PC-3 (cell line): ENCODE measurements at regions of chr9 and their contacts with region 1.

Region 1: GRCh38 chr9:14322211-14323082 is 8.5 kb upstream of the NFIB start:
- DNase-seq: peak; percentile 90
- ATAC-seq: peak; percentile 69
- H3K4me3 ChIP-seq: peak overlapping the region; percentile 86
- H3K27ac ChIP-seq: peak overlapping the region; percentile 84
- H3K4me1 ChIP-seq: peaks cover 58% of the 10 kb centered on the region
- H3K27me3 ChIP-seq: no peaks in the 10 kb centered on the region
- CTCF ChIP-seq: no peak

Region 2: GRCh38 chr9:13351778-13352386 is 970.6 kb before region 1 on chr9:
- CTCF ChIA-PET with region 1: interaction called, 6 read pairs
- POLR2A ChIA-PET with region 1: no interaction called
- intact Hi-C with region 1: loop called (anchors 10 kb)
- DNase-seq: peak; percentile 59
- ATAC-seq: peak; percentile 70
- H3K4me3 ChIP-seq: no peak overlapping the region
- H3K27ac ChIP-seq: no peak overlapping the region
- H3K4me1 ChIP-seq: peaks cover 6% of the 10 kb centered on the region; the same call in 1 of the 2 replicates
- H3K27me3 ChIP-seq: no peaks in the 10 kb centered on the region
- CTCF ChIP-seq: peak; percentile 76

Region 3: DNA sequence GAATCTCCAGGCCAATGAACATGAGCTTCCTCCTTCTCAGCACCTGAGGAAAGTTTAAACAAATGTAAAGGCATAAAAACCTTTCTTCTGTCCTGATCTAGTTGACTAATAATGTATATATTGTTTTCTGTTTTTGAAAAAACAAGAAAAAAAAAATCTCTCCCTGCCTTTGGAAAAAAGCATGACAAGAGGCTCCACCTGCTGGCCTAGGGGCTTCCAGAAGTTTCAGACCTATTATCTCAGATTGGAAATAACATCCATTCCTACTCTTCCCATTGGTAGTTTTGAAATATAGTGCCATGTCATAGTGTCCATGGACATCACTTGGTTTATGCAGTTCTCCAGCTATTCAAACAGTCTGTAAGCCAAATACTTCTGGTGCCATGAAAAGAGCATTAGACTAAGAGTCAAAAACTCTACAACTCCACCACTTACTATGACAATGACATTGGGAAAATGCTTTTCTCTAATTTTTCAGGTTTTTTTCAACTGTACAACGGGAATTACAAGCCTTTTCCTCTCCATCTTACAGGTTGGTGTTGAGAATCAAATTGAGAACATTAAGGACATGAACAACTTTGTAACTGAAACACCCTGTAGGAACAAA is 633.4 kb before region 1 on chr9:
- CTCF ChIA-PET with region 1: no interaction called
- POLR2A ChIA-PET with region 1: interaction called, 33 read pairs
- intact Hi-C with region 1: no loop called
- DNase-seq: peak; percentile 32
- ATAC-seq: no peak
- H3K4me3 ChIP-seq: no peak overlapping the region
- H3K27ac ChIP-seq: peak overlapping the region; percentile 76
- H3K4me1 ChIP-seq: peaks cover 32% of the 10 kb centered on the region
- H3K27me3 ChIP-seq: no peaks in the 10 kb centered on the region
- CTCF ChIP-seq: peak; percentile 65

Region 4: DNA sequence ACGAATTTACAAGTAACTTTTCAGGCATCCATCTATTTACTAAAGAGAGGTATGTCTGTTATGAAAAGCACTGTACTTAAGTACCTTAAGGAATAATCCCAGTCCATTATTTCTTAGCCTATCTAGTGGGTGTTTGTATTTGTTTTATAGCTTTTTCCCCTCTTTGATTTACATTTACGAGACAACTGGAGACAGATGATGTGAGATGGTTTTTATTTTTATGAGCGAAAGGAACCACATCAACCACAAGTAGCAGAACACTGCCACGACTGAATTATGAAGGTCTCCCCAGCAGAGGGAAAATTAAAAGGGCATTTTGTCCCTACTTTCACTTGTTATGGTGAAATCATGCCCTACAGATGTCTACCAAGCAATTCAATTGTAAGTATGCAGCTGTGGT is 366.3 kb before region 1 on chr9:
- CTCF ChIA-PET with region 1: no interaction called
- POLR2A ChIA-PET with region 1: interaction called, 10 read pairs
- intact Hi-C with region 1: no loop called
- DNase-seq: peak; percentile 19
- ATAC-seq: peak; percentile 24
- H3K4me3 ChIP-seq: no peak overlapping the region
- H3K27ac ChIP-seq: no peak overlapping the region
- H3K4me1 ChIP-seq: no peaks in the 10 kb centered on the region
- H3K27me3 ChIP-seq: no peaks in the 10 kb centered on the region
- CTCF ChIP-seq: no peak

Region 5: GRCh38 chr9:14205463-14205862 is 117.0 kb before region 1 on chr9:
- CTCF ChIA-PET with region 1: no interaction called
- POLR2A ChIA-PET with region 1: no interaction called
- intact Hi-C with region 1: loop called (anchors 5 kb)
- DNase-seq: peak; percentile 89
- ATAC-seq: peak; percentile 91
- H3K4me3 ChIP-seq: peak overlapping the region; percentile 29; the same call in 1 of the 2 replicates
- H3K27ac ChIP-seq: peak overlapping the region; percentile 55
- H3K4me1 ChIP-seq: peaks cover 52% of the 10 kb centered on the region
- H3K27me3 ChIP-seq: no peaks in the 10 kb centered on the region
- CTCF ChIP-seq: no peak

Region 6: GRCh38 chr9:14400658-14400995 is 78.2 kb after region 1 on chr9:
- CTCF ChIA-PET with region 1: interaction called, 6 read pairs
- POLR2A ChIA-PET with region 1: no interaction called
- intact Hi-C with region 1: loop called (anchors 2 kb)
- DNase-seq: peak; percentile 78
- ATAC-seq: peak; percentile 91
- H3K4me3 ChIP-seq: peak overlapping the region; percentile 58
- H3K27ac ChIP-seq: peak overlapping the region; percentile 23; the same call in 1 of the 2 replicates
- H3K4me1 ChIP-seq: peaks cover 20% of the 10 kb centered on the region
- H3K27me3 ChIP-seq: no peaks in the 10 kb centered on the region
- CTCF ChIP-seq: peak; percentile 70

Region 7: DNA sequence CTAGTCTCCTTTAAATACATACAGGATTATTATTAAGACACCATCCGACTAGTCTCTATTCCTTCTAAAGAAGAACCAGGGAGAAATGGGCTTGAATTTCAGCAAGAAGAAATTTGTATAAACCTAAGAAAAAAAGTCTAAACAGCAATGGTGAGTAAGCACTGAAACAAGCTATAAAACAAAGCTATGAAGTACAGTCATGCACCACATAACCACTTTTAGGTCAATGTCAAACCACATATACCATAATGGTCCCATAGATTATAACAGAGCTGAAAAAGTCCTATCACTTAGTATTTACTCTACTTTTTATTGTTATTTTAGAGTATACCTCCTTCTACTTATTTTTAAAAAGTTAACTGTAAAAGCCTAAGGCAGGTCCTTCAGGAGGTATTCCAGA is 93.5 kb after region 1 on chr9:
- CTCF ChIA-PET with region 1: no interaction called
- POLR2A ChIA-PET with region 1: no interaction called
- intact Hi-C with region 1: loop called (anchors 5 kb)
- DNase-seq: peak; percentile 86
- ATAC-seq: peak; percentile 89
- H3K4me3 ChIP-seq: no peak overlapping the region
- H3K27ac ChIP-seq: no peak overlapping the region
- H3K4me1 ChIP-seq: peaks cover 17% of the 10 kb centered on the region
- H3K27me3 ChIP-seq: 0 out of 2 replicates have a peak, but pooled peaks cover 8% of the 10 kb centered on the region
- CTCF ChIP-seq: no peak